ENCODE measurements at regions of chr10 and their contacts with region 1.

Region 1: DNA sequence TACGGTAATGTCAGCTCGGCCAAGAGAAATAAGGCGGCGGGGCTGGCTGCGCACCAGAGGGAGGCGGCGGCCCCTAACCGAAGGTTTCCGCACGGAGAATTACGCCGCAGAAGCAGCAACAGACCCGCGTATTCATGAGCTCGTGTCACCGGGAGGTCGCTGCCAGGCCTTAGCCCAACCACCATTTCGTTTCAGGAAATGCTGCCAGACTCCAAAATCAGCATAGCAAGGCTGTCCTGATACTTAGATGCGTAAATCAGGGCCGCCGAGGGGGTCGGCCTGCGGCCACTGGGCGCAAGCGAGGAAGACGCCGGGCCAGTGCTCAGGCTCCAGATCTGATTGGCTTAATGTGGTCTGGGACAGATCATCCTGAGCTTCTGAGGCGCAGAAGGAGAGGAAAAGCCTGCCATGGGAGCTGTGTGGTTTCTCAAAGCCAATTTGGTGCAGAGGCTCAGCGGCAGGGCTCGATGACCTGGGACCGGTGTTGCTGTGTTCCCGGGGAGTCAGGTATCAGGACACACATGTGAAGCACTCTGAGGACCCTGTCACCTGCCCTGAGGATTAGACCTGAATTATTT is 247.9 kb downstream of the BAMBI start:
- DNase-seq: no peak
- ATAC-seq: peak; percentile 72

Region 2: GRCh38 chr10:28858646-28859045 is 66.6 kb before region 1 on chr10:
- intact Hi-C with region 1: no loop called
- DNase-seq: no peak
- ATAC-seq: no peak

Region 3: DNA sequence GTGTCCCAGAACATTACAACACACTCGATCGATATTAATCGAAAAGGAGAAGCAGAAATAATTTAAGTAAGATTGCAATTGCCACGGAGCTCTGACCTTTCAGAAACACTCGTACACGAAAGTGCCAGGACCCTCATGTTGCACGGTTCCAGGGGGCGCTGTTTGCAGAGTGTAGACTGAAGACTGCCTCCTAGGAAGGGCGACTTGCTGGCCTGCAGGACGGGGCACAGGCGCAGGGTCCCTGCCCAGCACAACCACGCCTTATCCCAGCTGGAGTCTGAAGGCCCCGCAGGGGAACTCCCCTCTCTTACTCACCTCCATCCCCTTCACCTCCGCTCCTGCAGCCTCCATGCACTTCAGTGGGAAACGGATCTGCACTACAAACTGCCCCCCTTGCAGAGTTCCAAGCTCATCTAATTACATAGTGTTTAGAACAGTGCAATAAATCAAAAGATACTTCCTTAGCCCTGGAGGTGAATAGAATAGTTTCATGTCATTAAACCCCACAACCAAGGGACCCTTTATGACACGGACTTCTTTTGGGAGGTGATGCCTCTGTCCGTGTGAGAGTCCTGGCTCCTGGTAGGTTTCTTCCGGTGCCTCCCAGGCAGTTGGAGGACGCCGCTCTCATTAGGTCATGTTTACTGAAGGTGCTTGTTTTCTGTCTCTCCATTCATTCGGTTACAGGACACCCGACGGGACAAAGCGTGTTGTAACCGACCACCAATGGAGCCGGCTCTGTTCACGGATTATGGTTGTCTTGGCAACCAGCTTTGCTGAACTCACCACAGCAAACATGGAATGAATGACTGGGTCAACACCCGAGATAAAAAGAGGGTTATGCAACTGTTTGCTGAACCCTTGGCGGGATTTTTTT is 14.3 kb after region 1 on chr10:
- intact Hi-C with region 1: loop called (anchors 1 kb)
- DNase-seq: peak; percentile 67
- ATAC-seq: peak; percentile 99

Region 4: GRCh38 chr10:30902621-30903396 is 1977.6 kb after region 1 on chr10:
- intact Hi-C with region 1: no loop called
- DNase-seq: peak; percentile 59
- ATAC-seq: peak; percentile 41